ENCODE measurements at regions of chr1 and their contacts with region 1.

Region 1: DNA sequence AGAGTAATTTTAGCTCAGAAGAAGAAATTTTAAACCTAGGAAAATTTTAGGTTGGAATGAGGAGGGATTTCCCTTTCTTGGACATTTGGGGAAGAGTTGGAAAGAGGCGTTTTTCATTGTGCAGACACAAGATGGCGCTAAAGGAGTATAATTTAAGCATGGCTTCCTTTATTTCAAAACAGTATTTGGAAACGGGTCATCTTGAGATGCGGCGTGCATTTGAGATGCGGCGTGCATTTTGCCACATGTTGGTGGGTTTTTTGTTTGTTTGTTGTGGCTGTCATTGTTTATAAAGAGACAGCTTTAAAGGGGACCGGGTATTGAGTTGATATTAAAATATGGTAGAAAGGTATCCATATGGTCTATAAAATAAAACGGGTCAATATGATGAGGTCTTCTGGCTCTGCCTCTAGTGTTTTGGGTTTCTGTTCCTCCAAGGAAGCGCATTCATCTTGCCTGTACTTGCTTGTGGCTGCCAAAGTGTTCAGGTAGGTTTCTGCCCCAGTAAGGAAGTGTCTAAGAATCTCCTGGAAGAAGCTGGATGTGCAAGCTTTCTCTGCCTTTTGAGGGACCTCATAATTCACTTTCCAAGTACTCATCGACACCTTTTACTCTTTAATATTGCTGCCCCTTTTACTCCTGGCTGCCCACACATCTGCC is 210.3 kb downstream of the SLC35F3 start:
- DNase-seq: no peak
- H3K4me3 ChIP-seq: peak overlapping the region in 1 of 4 donors; percentile 14
- H3K27ac ChIP-seq: no peak overlapping the region
- H3K4me1 ChIP-seq: peaks cover 0 to 5% (median 2%) of the 10 kb centered on the region in 4 donors
- H3K27me3 ChIP-seq: peaks cover 0 to 23% (median 2%) of the 10 kb centered on the region in 4 donors
- CTCF ChIP-seq: peak; percentile 52 to 64 (median 53)
- EP300 ChIP-seq: no peak
- POLR2A ChIP-seq: no peak

Region 2: GRCh38 chr1:234222561-234223280 is 107.9 kb after region 1 on chr1:
- intact Hi-C with region 1: no loop called
- DNase-seq: no peak
- H3K4me3 ChIP-seq: no peak overlapping the region
- H3K27ac ChIP-seq: no peak overlapping the region
- H3K4me1 ChIP-seq: no peaks in the 10 kb centered on the region
- H3K27me3 ChIP-seq: peaks cover 0 to 20% (median 0%) of the 10 kb centered on the region in 4 donors
- CTCF ChIP-seq: no peak
- EP300 ChIP-seq: no peak
- POLR2A ChIP-seq: no peak

Region 3: DNA sequence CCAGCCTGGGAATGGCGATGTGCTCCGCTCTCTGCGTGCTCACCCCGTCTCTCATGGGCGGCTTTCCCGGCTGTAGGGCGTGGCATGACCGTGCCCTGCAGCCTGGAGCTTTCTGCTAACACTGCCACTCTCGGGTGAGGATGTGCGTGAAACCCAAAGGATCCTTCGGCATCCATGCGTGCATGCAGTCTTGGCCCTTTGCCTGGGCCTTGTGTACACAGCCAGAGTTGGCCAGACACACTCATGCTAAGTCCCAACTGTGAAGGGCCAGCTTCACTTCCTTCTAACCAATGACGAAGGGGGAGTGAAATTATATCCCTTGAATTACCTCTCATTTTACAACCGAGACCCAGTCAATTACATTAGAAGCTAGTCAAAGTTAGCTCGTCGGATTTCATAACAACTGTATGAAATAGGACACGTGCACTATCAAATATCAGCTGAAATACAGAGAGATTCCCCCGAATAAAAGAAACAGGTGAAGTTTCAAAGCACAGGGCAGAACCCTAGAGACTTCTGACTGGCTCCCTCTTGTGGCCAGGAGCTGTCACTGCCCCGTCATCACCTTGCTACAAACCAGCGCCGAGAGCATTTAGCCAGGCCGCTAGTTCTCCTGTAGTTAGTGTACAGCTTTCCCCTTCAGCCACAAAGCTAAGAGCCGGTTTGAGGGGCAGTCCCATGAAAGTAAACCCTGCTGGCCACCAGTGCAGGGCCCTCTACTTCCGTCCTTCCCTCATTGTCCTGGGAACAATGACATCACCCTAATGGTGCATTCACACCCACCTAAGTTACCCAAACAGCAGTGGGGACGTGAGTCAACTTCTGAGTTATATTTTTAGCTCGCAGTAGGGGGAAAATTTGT is 195.1 kb after region 1 on chr1:
- intact Hi-C with region 1: loop called (anchors 10 kb)
- DNase-seq: no peak
- H3K4me3 ChIP-seq: no peak overlapping the region
- H3K27ac ChIP-seq: no peak overlapping the region
- H3K4me1 ChIP-seq: peaks cover 0 to 7% (median 5%) of the 10 kb centered on the region in 4 donors
- H3K27me3 ChIP-seq: no peaks in the 10 kb centered on the region
- CTCF ChIP-seq: peak; percentile 65 to 89 (median 79)
- EP300 ChIP-seq: no peak
- POLR2A ChIP-seq: no peak

Measured in esophagus muscularis mucosa (tissue), 4 donors.